ENCODE measurements at regions of chr20 and their contacts with region 1.

Region 1: DNA sequence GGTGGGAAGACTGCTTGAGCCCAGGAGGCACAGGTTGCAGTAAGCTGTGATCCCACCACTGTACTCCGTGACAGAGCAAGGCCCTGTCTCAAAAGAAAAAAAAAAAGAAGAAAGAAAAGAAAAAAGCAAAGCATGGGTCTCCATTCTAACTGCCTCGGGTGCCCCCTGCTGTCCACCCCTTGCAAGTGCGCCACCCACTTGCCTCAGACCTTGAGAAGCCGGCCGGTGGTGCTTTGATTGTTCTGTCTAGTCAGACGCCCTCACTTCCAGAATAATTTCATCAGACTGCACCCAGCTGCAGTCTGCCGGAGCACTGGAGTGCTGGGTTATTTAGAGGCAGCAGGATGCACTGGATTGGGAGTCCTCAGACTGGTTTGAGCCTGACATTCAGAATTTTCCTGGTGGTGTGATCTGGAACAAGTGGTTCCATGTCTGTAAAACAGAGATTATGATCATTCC is 17.6 kb upstream of the TM9SF4 start:
- DNase-seq: peak; percentile 91 to 95
- H3K4me3 ChIP-seq: no peak overlapping the region
- H3K4me3 Mint-ChIP-seq: no peak overlapping the region
- H3K27ac Mint-ChIP-seq: no peak overlapping the region
- H3K4me1 ChIP-seq: no peaks in the 10 kb centered on the region
- H3K4me1 Mint-ChIP-seq: no peaks in the 10 kb centered on the region
- H3K27me3 ChIP-seq: no peaks in the 10 kb centered on the region; the same call in 1 of the 2 replicates
- H3K27me3 Mint-ChIP-seq: peaks cover 13% of the 10 kb centered on the region
- CTCF ChIP-seq: peak; percentile 99 to 100

Region 2: GRCh38 chr20:31822421-31823330 is 269.2 kb before region 1 on chr20:
- CTCF ChIA-PET with region 1: interaction called, 4 read pairs
- POLR2A ChIA-PET with region 1: no interaction called
- intact Hi-C with region 1: loop called (anchors 1 kb)
- DNase-seq: peak; percentile 80 to 92
- H3K4me3 ChIP-seq: no peak overlapping the region
- H3K4me3 Mint-ChIP-seq: no peak overlapping the region
- H3K27ac Mint-ChIP-seq: no peak overlapping the region
- H3K4me1 ChIP-seq: no peaks in the 10 kb centered on the region
- H3K4me1 Mint-ChIP-seq: no peaks in the 10 kb centered on the region
- H3K27me3 ChIP-seq: no peaks in the 10 kb centered on the region
- H3K27me3 Mint-ChIP-seq: no peaks in the 10 kb centered on the region
- CTCF ChIP-seq: peak; percentile 100

Region 3: DNA sequence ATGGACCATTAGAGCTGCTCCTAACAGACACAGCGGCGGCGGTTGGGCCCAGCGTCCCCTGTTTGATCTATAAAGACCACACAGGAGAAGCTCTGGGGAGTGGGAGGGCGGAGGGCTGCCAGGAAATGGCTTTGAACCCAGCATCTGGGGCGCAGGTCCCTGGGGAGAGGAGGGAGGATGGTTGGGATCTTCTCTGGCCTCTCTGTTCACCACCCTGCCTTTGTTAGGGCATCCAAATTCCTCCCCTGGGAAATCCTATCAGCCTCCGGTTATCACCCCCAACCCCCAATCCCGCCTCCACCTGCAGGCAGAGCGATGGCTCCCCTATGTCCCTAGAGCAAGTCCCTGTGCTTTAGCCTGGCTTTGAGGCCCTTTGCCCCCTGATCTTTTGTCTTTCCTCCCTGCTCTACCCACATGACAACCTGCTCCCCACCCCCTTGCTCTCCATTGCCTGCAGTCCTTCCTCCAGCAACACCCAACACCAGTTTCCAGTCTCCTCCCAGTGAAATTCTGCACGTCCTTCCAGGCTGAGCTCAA is 116.9 kb before region 1 on chr20:
- CTCF ChIA-PET with region 1: no interaction called
- POLR2A ChIA-PET with region 1: no interaction called
- intact Hi-C with region 1: loop called (anchors 5 kb)
- DNase-seq: no peak
- H3K4me3 ChIP-seq: no peak overlapping the region
- H3K4me3 Mint-ChIP-seq: no peak overlapping the region
- H3K27ac Mint-ChIP-seq: no peak overlapping the region
- H3K4me1 ChIP-seq: 0 out of 2 replicates have a peak, but pooled peaks cover 7% of the 10 kb centered on the region
- H3K4me1 Mint-ChIP-seq: no peaks in the 10 kb centered on the region
- H3K27me3 ChIP-seq: 0 out of 2 replicates have a peak, but pooled peaks cover 1% of the 10 kb centered on the region
- H3K27me3 Mint-ChIP-seq: peaks cover 39% of the 10 kb centered on the region
- CTCF ChIP-seq: no peak